Activated CD4-positive, alpha-beta T cell treated with anti-CD3 and anti-CD28 coated beads, Interleukin-2, amount 10 ng/mL, durations not matched to agents 7 days and 5 days (primary cell): ENCODE measurements at regions of chr4 and their contacts with region 1.

Region 1: DNA sequence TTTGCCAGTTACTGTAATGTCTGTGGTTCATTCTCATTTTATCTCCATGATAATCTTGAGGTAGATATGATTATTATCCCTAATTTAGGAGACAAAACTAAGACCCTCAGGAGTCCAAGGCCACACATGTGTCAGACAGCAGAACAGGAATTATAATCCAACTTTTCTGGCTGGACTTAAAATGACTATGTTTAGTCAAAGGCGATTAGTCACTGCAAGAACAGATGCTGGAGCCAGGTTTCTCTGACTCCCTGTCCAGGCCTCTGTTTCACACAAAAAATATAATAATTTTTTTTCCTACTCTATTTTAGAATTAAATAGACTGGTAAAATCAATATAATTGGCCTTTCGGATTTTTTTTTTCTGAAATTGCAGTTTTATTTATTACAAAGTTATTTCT is 56.7 kb upstream of the TMEM131L start:
- DNase-seq: no peak
- H3K4me3 Mint-ChIP-seq: no peak overlapping the region
- H3K27ac Mint-ChIP-seq: no peak overlapping the region
- H3K4me1 Mint-ChIP-seq: peaks cover 13% of the 10 kb centered on the region
- H3K27me3 Mint-ChIP-seq: no peaks in the 10 kb centered on the region

Region 2: DNA sequence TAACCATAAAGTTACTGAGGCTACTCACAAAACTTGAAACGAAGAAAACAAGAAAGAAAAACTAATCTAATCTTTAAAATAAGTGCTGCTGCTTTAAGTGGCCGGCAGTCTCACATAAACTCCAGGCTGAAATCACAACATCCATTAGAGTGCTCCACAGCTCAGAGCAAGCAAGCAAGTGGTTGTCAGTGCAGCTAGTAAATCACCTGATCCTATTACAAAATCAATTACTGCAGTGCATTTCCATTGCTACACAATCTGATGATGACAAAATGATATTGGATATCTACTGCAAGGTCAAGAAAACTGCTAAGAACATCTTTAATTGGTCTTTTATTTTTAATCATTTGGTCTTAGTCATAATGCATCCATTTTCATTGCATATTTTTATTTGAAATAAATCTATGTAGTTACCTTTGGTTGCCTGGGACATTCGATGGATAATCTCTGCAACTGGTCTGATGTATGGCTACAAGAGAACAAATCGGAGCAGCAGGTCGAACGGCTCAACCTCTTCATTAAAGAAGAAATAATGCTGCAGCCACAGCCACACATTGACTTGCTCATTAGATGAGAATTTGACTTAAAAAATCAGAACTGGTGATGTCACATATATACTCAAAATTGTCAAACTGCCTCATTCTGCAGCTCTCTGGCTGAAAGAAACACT is 961.2 kb before region 1 on chr4:
- CTCF ChIA-PET with region 1: no interaction called
- POLR2A ChIA-PET with region 1: interaction called, 11 read pairs
- DNase-seq: no peak
- H3K4me3 Mint-ChIP-seq: no peak overlapping the region
- H3K27ac Mint-ChIP-seq: no peak overlapping the region
- H3K4me1 Mint-ChIP-seq: peaks cover 9% of the 10 kb centered on the region
- H3K27me3 Mint-ChIP-seq: no peaks in the 10 kb centered on the region